AG04449 (cell line): ENCODE measurements at regions of chr7 and their contacts with region 1.

Region 1: GRCh38 chr7:94395141-94396036 is 694 bp downstream of the COL1A2 start:
- DNase-seq: no peak
- H3K4me3 ChIP-seq: peak overlapping the region; percentile 73
- CTCF ChIP-seq: peak; percentile 57

Region 2: GRCh38 chr7:94301024-94301586 is 94.3 kb before region 1 on chr7:
- CTCF ChIA-PET with region 1: interaction called, 545 read pairs
- POLR2A ChIA-PET with region 1: interaction called, 691 read pairs
- DNase-seq: no peak
- H3K4me3 ChIP-seq: peak overlapping the region; percentile 40
- CTCF ChIP-seq: peak; percentile 19

Region 3: GRCh38 chr7:94348142-94348541 is 47.2 kb before region 1 on chr7:
- CTCF ChIA-PET with region 1: interaction called, 8 read pairs
- POLR2A ChIA-PET with region 1: interaction called, 28 read pairs
- DNase-seq: peak; percentile 94
- H3K4me3 ChIP-seq: no peak overlapping the region
- CTCF ChIP-seq: no peak

Region 4: DNA sequence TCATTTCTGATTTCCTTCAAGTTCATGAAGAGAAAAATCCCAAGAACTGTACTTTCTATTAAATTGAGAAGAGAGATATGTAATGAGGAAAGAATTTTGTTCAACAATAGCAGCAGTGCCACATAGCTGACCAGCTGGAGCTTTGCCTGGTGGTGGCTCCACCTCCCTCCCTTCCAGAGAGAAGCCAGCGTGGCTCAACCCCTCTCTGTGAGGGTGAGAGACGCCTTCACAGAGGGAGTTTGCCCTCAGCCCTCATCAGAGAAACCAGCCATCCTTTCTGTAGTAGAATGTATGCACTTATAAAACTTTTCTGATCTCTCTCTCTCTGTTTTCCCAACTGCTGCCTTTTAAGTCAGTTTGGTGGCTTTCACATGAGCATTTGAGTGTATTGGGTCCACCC is 21.2 kb before region 1 on chr7:
- CTCF ChIA-PET with region 1: interaction called, 21 read pairs
- POLR2A ChIA-PET with region 1: interaction called, 109 read pairs
- DNase-seq: no peak
- H3K4me3 ChIP-seq: peak overlapping the region; percentile 43
- CTCF ChIP-seq: no peak

Region 5: GRCh38 chr7:94414481-94414880 is 19.1 kb after region 1 on chr7:
- CTCF ChIA-PET with region 1: interaction called, 3 read pairs
- POLR2A ChIA-PET with region 1: interaction called, 30 read pairs
- DNase-seq: no peak
- H3K4me3 ChIP-seq: no peak overlapping the region
- CTCF ChIP-seq: no peak

Region 6: DNA sequence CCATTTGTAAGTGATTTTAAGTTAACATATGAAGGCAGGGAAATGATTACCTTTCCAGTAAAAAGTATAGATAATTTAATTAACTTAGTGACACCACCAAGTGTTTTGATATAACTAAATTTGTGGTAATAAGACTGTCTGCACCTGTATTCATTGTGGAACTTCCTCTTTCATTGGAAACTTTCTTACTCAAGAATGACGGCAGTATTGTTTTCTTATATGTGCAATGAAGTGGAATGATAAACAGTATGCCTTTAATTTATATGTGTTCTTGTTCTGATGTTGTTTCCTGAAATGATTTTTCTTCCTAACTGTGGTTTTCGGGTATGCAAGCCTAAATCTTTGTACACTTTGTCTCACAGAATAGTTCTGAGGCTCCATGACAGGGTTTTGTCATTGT is 160.6 kb after region 1 on chr7:
- CTCF ChIA-PET with region 1: no interaction called
- POLR2A ChIA-PET with region 1: no interaction called
- DNase-seq: no peak
- H3K4me3 ChIP-seq: no peak overlapping the region
- CTCF ChIP-seq: no peak